BJ (cell line): ENCODE measurements at regions of chr12 and their contacts with region 1.

Region 1: DNA sequence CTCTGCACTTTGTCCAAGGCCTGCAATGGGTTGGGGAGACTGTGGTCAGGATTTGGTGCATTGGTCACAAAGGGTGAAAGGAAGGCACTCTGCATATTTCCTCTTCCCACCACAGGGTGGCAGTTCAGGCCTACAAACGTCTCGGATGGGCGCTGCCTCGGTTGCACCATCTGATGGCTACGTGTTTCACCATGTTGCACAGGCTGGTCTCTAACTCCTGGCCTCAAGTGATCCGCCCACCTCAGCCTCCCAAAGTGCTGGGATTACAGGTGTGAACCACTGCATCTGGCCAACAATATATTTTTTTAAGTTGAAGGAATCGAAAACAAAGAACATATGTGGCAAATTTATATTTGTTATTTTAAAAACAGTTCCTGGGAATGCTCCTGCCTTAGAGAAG is 35.1 kb downstream of the TMBIM6 start:
- DNase-seq: no peak
- H3K4me3 ChIP-seq: no peak overlapping the region
- H3K27me3 ChIP-seq: no peaks in the 10 kb centered on the region
- CTCF ChIP-seq: peak; percentile 84

Region 2: DNA sequence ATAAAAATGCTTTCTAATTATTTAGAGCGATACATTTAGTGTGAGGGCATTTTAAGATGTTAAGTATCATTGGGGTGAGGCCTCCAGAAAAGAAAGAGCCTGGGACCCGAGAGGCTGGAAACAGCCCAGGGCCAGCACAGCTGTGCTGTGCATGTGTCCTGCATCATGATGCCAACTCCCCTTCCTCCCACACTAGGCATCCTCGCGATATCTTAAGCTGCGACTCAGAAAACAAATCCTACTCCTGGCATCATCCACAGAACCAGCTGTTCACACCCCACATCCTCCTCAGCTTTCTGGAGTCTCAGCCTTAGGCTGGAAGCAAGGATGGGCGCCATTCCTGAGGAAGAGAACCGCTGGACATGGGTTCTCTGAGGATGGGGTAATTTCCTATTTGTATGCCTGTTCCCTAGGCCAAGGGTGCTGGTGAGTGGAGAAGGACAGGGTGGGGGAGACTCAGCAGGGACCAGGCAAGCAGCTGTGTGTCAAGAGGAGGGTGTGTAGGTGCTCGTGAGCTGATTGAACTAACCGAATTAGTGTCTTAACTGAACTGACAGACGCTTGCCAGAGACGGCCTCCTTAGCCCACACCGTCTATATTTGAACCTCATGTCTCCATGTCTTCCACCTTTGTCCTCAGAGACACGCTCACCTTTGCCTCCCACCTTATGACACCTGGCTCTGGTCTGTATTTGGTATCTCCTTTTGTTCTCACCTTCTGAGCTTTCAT is 192.9 kb before region 1 on chr12:
- CTCF ChIA-PET with region 1: no interaction called
- POLR2A ChIA-PET with region 1: no interaction called
- DNase-seq: no peak
- H3K4me3 ChIP-seq: no peak overlapping the region
- H3K27me3 ChIP-seq: no peaks in the 10 kb centered on the region
- CTCF ChIP-seq: no peak

Region 3: GRCh38 chr12:49707128-49707811 is 69.1 kb before region 1 on chr12 and contains the start of gene FMNL3:
- CTCF ChIA-PET with region 1: no interaction called
- POLR2A ChIA-PET with region 1: no interaction called
- DNase-seq: peak; percentile 59
- H3K4me3 ChIP-seq: peak within 1 kb of the TSS; percentile 83
- H3K27me3 ChIP-seq: peaks cover 7% of the 10 kb centered on the region
- CTCF ChIP-seq: peak; percentile 91
- polyA plus RNA-seq, gene FMNL3: 10.6 and 13.3 TPM in 2 replicates

Region 4: DNA sequence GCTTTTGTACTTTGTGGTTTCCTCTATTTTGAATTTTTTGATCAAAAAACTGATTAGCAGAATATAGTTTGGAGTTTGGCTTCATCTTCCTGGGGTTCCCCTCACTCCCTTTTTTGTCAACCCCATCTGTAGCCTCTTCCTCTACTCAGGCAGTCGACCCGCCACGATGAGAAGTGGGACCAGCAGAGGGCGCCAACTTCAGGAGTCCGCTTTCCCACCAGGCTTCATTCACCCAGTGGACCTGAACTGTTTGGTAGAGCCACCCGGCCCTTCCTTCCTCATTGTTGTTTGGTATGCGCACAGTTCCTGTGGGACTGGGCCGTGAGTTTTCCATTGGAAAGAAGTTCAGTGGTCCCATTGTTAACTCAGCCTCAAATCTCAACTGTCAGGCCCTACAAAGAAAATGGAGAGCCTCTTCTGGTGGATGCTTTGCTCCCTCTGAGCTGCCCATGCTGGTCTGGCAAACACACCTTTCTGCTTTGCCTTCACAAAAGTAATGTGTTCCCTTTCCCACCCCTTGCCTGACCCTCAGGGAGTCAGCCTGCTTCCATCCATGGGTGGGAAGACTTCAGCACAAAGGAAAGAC is 13.3 kb before region 1 on chr12:
- CTCF ChIA-PET with region 1: interaction called, 11 read pairs
- POLR2A ChIA-PET with region 1: no interaction called
- DNase-seq: no peak
- H3K4me3 ChIP-seq: no peak overlapping the region
- H3K27me3 ChIP-seq: no peaks in the 10 kb centered on the region
- CTCF ChIP-seq: peak; percentile 86

Region 5: DNA sequence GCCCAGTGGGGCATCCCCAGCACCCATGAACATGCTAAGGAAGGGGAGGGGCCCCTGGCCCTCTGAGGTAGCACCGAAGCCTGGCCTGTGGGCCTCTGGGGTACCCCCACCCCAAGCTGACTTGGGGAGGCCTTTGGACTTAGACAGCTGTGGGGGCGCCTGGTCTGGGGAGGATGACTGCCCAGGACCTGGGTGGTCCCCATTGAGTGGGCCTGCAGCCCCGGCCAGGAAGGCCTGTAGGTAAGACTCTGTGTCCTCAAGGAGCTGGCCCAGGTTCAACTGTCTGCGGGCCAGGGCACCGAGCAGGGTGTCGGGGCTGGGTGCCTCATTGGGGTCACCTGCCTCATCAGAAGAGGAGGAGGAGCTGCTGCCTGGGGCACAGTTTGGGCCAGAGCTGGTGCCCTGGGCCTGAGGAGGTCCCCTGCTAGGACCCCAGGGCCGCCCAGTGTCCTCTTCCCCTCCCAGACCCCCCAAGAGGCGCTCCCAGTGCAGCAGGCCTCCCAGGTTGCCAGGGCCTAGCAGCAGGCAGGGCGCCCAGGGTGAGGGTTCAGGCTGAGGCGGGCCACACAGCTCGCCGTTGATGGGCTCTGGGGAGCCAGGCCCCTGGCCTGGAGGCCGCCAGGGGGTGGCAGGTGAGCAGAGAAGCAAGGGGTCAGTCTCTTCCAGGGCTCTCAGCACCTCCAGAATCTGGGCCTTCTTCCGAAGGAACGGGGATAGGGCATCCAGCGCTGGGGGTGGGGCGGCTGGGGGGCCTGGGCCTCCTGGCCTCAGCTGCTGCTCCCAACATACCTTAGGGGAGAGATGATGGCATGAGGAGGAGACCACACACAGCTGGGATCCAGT is 20.4 kb after region 1 on chr12:
- CTCF ChIA-PET with region 1: interaction called, 14 read pairs
- POLR2A ChIA-PET with region 1: no interaction called
- DNase-seq: no peak
- H3K4me3 ChIP-seq: no peak overlapping the region
- H3K27me3 ChIP-seq: no peaks in the 10 kb centered on the region
- CTCF ChIP-seq: no peak

Region 6: DNA sequence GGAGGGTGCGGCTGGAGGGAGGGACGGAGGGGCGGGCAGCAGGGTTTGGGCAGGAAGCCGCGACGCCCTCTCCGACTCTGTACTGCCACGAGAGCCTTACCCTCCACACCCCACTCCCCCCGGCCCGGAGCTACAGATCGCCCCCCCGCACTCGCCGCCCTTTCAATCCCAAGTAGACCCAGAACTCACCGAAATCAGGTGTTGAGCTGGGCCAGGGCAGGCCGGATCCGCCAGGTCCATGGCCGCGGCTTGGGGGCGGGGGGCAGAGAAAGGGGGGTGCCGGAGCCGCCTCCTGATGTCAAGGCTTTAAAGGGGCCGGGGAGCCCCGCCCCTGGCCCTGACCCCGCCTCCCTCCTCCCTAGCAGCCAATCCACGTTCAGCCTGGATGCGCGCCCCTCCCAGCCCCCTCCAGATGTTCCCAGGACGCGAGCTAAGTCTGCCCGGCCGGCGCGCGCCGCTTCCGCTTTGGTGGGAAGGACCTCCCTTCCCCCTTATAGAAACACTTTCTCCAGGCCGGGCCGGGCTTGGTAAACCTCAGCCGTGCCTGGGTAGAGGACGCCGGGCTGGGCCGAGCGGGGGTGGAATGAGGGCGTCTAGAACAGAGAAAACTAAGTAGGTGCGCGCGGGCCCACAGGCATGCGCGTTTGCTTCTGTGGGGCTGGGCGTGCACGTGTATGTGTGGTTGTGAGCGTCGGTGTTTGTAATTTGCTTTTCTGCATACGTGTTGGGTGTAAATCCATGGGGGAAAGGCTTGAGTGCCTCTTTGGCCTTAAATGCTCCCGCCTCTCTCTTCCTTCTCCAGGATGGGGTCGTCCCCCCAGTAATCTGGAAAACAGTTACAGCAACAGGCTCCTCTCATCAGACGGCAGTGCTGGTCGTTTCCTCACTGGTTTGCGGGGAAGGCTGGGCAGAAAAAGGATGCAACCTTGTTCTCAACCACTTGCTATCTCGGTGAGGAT is 52.0 kb after region 1 on chr12 and contains the start of gene NCKAP5L:
- CTCF ChIA-PET with region 1: interaction called, 7 read pairs
- POLR2A ChIA-PET with region 1: interaction called, 12 read pairs
- DNase-seq: peak; percentile 74
- H3K4me3 ChIP-seq: peak within 1 kb of the TSS; percentile 92
- H3K27me3 ChIP-seq: no peaks in the 10 kb centered on the region
- CTCF ChIP-seq: no peak
- polyA plus RNA-seq, gene NCKAP5L: 7.3 and 13.2 TPM in 2 replicates

Region 7: DNA sequence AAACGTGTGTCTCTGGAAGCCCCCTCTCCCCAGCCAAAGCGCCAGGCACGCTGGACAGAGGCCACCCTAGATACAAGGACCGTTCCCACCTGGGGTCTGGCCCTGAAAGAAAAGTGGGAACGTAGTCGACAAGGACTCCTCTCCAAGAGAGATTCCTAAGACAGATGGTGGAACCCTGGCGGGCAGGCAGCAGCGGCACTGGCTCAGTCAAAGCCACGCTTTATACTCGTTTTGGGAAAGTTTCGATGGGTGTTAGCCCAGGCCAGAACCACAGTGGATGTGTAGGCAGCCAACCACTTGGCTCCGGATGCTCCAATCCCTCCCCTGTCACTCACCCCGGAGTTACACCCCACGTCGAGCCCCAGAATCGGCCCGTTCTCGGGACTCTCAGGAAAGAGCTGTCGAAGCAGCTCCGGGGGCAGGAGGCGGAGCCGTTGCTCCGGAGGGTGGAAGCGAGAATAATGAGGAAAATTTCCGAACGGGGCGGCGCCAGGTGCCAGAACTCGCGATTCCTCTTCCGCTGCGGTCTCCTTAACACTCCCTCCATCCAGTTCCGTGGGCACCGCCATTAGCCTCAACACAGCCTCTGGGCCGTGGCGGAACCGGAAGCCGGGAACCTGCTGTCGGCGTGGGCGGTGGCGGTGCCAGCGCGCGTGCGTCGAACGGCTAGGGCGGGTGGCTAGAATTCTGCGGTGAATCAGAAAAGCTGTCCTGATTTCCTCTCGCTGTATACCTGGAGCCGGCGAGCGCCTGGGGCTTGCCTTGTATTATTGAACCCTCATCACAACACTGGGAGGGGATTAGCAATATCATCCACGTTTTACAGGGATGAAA is 66.3 kb after region 1 on chr12 and contains the start of gene BCDIN3D:
- CTCF ChIA-PET with region 1: interaction called, 59 read pairs
- POLR2A ChIA-PET with region 1: no interaction called
- DNase-seq: peak; percentile 52
- H3K4me3 ChIP-seq: peak within 1 kb of the TSS; percentile 80
- H3K27me3 ChIP-seq: no peaks in the 10 kb centered on the region
- CTCF ChIP-seq: no peak
- polyA plus RNA-seq, gene BCDIN3D: 2.6 and 3.5 TPM in 2 replicates